ENCODE measurements at regions of chr3 and their contacts with region 1.

Region 1: DNA sequence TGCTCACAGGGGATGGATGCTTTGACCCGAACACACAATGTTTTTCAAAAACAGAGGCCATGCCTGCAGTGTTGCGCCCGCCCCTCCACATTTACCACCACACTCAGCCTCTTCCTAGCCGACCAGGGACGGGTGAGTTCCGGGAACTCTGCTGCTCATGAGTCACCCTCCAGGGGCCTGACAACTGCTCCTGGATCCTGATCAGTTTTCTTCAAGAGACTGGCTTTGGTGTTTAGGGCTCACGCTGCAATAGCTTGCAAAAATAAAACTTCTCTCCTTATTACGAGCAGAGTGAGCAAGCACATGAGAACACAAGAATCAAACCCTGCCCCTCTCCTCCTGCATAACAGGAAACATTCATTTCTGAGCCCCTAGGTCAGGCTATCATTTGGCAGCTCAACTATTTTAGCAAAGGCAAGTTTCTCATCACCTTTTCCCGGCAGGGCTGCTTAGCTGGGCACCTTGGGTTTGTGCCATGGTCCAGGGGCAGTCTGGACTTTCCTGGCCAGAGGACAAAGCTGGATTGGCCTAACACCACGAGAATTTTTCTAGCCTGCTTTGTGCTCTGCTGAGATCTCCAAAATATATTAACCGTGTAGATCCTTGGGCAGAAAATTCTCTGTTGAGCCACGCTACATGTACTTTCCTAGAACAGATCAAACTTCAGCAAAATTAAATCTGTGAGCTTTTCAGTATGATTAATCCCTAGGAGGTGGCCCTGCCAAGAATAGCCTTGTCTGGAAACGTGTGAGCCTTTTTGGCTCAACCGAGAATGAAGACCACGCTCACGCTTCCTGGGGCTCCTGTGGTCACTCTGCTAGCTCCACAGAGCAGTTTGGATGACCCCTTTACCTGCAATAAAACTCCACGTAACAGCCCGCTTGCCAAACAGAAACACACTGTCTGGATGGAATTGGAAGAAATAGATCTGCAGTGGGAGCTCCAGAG is 52.7 kb upstream of the SPATA12 start:
- DNase-seq: peak; percentile 54
- H3K4me3 Mint-ChIP-seq: peak overlapping the region; percentile 59
- H3K27ac Mint-ChIP-seq: peak overlapping the region; percentile 97
- H3K4me1 Mint-ChIP-seq: peaks cover 25% of the 10 kb centered on the region
- H3K27me3 Mint-ChIP-seq: no peaks in the 10 kb centered on the region
- CTCF ChIP-seq: no peak

Region 2: DNA sequence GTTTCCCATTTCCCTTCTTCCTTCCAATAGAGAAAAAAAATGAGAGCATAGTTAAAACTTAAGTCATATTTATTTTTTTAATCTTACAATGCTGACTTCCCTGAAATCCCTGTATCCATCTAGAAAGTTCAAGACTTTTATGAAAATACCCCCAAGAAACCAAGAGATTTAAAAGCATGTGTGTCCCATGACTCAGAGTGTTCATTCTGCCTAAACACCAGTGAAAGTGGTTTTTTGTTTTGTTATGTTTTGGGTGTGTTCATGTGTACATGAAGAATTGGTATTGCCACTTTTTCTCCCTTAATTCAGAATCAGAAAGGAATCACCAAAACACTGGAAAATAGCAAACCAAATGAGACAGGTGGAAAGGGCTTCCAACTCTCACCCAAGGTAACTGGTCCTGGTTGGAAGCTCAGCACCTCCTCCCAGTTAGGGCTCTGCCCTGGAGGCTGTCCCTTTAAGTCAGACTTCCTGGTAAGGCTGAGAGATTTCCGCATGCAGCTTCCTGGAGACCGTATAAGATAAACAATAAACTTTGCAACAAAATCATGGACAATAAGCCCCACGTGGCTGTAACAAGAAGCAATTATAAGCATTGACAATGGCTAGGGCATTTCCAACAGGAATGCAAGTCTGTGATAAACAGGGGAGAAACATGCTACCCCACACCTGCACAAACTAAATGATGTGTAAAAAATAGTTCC is 84.1 kb before region 1 on chr3:
- CTCF ChIA-PET with region 1: no interaction called
- intact Hi-C with region 1: no loop called
- DNase-seq: peak; percentile 51
- H3K4me3 Mint-ChIP-seq: no peak overlapping the region
- H3K27ac Mint-ChIP-seq: peak overlapping the region; percentile 7
- H3K4me1 Mint-ChIP-seq: peaks cover 28% of the 10 kb centered on the region
- H3K27me3 Mint-ChIP-seq: no peaks in the 10 kb centered on the region
- CTCF ChIP-seq: no peak

Region 3: GRCh38 chr3:57060089-57060829 is 52.5 kb after region 1 on chr3 and contains the start of gene SPATA12:
- CTCF ChIA-PET with region 1: no interaction called
- intact Hi-C with region 1: loop called (anchors 2 kb)
- DNase-seq: peak; percentile 94
- H3K4me3 Mint-ChIP-seq: peak within 1 kb of the TSS; percentile 43
- H3K27ac Mint-ChIP-seq: peak within 1 kb of the TSS; percentile 90
- H3K4me1 Mint-ChIP-seq: peaks cover 68% of the 10 kb centered on the region
- H3K27me3 Mint-ChIP-seq: no peaks in the 10 kb centered on the region
- CTCF ChIP-seq: no peak
- total RNA-seq, gene SPATA12: 0.47 and 0.64 TPM in 2 replicates

Region 4: DNA sequence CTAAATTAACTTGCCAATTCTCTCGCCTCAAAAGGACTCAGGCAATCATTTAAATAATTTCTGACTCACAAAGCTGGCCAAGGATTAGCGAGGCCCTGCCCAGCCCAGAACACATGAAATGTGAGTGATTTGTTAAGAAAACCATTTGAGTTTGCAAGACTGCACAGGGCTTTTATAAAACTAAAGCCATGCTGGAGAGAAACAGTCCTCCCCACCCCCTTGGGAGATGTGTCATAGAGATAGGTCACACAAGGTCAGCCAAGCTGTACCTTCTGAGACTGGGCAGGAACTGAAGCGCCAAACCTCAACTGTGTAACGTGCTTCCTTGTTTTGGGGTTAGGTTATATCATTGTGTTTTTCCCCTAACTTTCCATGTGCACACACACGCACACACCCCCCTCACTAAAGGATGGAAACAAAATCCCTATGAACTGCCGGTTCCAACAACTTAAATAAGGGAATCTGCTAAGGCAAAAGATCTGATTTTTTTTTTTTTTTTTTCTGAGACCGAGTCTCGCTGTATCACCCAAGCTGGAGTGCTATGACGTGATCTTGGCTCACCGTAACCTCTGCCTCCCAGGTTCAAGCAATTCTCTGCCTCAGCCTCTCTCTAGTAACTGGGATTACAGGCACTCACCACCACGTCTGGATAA is 60.8 kb after region 1 on chr3:
- CTCF ChIA-PET with region 1: no interaction called
- intact Hi-C with region 1: loop called (anchors 2 kb)
- DNase-seq: peak; percentile 70
- H3K4me3 Mint-ChIP-seq: peak overlapping the region; percentile 36
- H3K27ac Mint-ChIP-seq: peak overlapping the region; percentile 78
- H3K4me1 Mint-ChIP-seq: peaks cover 26% of the 10 kb centered on the region
- H3K27me3 Mint-ChIP-seq: no peaks in the 10 kb centered on the region
- CTCF ChIP-seq: no peak

Region 5: DNA sequence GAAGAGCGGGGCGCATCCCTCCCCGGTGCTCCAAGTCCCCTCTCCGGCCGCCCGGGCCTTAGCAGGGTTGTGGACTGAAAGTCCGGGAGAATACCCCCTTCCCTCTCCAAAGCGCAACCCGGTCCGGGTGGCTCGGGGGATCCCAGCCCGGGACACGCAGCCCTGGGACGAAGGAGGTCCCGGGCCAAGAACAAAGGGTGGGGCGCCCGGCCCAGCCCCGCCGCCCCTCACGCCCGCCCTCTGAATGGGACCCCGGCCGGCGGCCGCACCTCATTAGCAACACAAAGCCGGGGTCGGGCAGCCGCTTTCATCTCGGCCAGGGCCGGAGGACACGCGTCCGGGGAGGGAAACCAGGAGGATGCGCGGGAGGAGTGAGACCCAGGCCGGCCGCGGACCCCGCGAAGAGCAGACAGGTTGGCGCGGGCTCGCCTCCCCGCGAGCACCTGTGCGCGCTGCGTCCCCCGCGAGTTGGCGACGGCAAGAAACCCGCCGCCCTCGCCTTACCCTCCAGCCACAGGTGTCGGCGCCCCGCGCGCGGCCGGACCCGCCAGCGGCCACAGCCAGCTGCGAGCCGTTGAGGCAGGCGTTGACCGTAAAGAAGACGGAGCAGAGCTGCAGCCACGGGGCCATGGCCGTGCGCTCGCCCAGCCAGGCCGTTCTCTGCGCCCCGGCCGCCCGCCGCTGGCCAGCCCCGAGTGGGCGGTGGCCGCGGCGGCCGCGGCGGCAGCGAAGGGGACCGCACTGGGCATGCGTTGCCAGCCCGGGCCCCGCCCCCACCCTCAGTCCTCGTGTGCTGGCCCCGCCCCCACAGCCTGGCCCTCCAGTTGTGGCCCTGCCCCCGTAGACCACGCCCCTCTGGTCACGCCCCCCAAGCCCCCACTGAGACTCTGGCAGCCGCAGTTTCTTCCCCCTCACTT is 157.1 kb after region 1 on chr3 and contains the start of gene IL17RD:
- CTCF ChIA-PET with region 1: no interaction called
- intact Hi-C with region 1: no loop called
- DNase-seq: peak; percentile 82
- H3K4me3 Mint-ChIP-seq: peak within 1 kb of the TSS; percentile 74
- H3K27ac Mint-ChIP-seq: peak within 1 kb of the TSS; percentile 39
- H3K4me1 Mint-ChIP-seq: peaks cover 14% of the 10 kb centered on the region
- H3K27me3 Mint-ChIP-seq: peaks cover 59% of the 10 kb centered on the region
- CTCF ChIP-seq: no peak
- total RNA-seq, gene IL17RD: 2.0 and 2.2 TPM in 2 replicates